Activated CD4-positive, alpha-beta memory T cell treated with anti-CD3 and anti-CD28 coated beads, Interleukin-2, amount 10 ng/mL, durations not matched to agents 7 days and 5 days (primary cell): ENCODE measurements at regions of chr18 and their contacts with region 1.

Region 1: DNA sequence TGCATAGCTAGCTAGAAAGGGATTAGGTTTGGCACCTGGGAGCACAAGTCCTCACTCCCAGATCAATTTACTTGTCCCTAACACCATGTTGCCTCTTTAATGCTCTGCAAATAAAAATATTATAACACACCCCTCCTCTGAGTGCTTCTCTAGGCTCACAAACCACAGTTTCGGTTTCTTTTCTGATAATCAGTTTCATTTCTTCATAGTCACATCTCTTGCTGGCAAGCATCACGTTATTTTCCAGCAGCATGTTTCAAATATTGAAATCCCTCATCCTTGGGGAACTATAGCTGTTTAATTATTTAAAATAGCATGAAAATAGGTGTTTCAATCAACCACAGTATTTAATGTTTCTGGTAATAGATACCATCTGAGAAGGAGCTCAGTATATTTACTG is 13.9 kb upstream of the SMCHD1 start:
- DNase-seq: no peak
- H3K4me3 Mint-ChIP-seq: peak overlapping the region; percentile 45
- H3K27ac Mint-ChIP-seq: peak overlapping the region; percentile 92
- H3K4me1 Mint-ChIP-seq: peaks cover 54% of the 10 kb centered on the region
- H3K27me3 Mint-ChIP-seq: no peaks in the 10 kb centered on the region

Region 2: DNA sequence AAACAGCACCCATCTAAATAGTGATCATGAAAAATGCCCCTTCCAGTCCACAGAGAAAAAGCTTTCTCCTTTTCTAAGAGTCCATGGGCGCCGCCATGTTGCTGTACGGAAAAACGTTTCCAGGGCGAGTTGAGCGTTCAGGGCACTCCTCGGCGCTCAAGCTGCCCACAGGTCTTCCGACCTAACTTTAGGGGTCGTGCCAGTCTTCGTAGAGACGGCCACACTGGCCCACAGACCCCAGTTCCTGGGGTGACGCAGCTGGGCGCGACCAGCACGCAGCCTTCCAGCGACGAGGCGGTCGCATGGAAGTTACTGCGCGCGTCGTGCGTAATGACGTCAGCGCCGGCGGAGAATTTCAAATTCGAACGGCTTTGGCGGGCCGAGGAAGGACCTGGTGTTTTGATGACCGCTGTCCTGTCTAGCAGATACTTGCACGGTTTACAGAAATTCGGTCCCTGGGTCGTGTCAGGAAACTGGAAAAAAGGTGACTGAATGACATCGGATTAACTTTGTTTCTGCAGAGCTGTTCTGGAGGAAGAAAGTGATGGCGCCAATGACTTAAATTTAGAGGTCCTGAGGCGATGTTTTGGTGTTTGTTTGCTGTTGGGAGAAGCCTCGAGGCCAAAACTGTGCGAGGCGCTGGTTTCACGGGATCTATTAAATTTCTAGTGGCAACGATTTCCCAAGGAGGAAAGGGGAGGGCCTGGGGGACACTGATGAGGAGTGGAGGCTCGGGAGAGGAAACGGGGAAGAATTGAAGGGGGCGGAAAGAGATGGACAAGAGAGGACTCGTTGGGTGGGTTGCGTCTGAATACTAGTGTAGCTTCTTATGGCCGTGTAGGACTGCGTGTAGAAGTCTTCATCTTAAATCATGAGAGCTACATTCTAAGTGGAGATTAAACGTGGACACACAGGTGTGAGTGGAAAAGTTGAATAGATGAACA is 70.2 kb before region 1 on chr18 and contains the starts of genes METTL4 and NDC80:
- CTCF ChIA-PET with region 1: interaction called, 5 read pairs
- POLR2A ChIA-PET with region 1: interaction called, 93 read pairs
- DNase-seq: peak; percentile 87
- H3K4me3 Mint-ChIP-seq: peak within 1 kb of the TSS; percentile 95
- H3K27ac Mint-ChIP-seq: peak within 1 kb of the TSS; percentile 96
- H3K4me1 Mint-ChIP-seq: peaks cover 55% of the 10 kb centered on the region
- H3K27me3 Mint-ChIP-seq: no peaks in the 10 kb centered on the region
- total RNA-seq, gene METTL4: 22.1 to 23.7 TPM
- total RNA-seq, gene NDC80: 78.0 to 78.9 TPM

Region 3: DNA sequence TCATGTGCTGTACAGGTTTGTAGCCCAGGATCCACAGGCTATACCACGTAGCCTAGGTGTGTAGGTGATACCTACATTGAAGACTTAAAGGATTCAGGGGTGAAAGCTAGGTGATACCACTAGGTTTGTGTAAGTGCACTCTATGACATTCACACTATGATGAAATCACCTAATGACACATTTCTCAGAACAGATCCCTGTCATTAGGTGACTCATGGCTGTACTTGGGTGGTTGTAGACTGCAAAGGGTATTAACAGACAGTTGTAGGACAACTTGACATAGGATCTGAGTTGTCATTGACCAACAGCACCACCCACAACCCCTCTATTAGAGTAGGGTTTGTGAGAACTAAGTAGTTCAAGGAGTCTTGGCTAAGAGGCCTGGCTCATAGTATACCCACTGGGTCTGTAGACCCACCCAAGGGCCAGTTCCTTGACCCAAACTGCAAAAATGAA is 13.8 kb before region 1 on chr18:
- CTCF ChIA-PET with region 1: interaction called, 4 read pairs
- POLR2A ChIA-PET with region 1: interaction called, 40 read pairs
- DNase-seq: peak; percentile 28
- H3K4me3 Mint-ChIP-seq: no peak overlapping the region
- H3K27ac Mint-ChIP-seq: peak overlapping the region; percentile 58
- H3K4me1 Mint-ChIP-seq: peaks cover 29% of the 10 kb centered on the region
- H3K27me3 Mint-ChIP-seq: no peaks in the 10 kb centered on the region